Breast epithelium (tissue), 4 donors: ENCODE measurements at regions of chr6 and their contacts with region 1.

Region 1: GRCh38 chr6:98452685-98453084 is 381.7 kb upstream of the POU3F2 start:
- DNase-seq: no peak
- H3K4me3 ChIP-seq: no peak overlapping the region
- H3K27ac ChIP-seq: no peak overlapping the region
- H3K4me1 ChIP-seq: no peaks in the 10 kb centered on the region
- H3K27me3 ChIP-seq: no peaks in the 10 kb centered on the region
- CTCF ChIP-seq: no peak
- POLR2A ChIP-seq: no peak

Region 2: GRCh38 chr6:98384801-98385200 is 67.9 kb before region 1 on chr6:
- intact Hi-C with region 1: no loop called
- DNase-seq: no peak
- H3K4me3 ChIP-seq: no peak overlapping the region
- H3K27ac ChIP-seq: no peak overlapping the region
- H3K4me1 ChIP-seq: no peaks in the 10 kb centered on the region
- H3K27me3 ChIP-seq: no peaks in the 10 kb centered on the region
- CTCF ChIP-seq: no peak
- POLR2A ChIP-seq: no peak

Region 3: GRCh38 chr6:98487612-98488011 is 34.9 kb after region 1 on chr6:
- intact Hi-C with region 1: no loop called
- DNase-seq: no peak
- H3K4me3 ChIP-seq: no peak overlapping the region
- H3K27ac ChIP-seq: no peak overlapping the region
- H3K4me1 ChIP-seq: no peaks in the 10 kb centered on the region
- H3K27me3 ChIP-seq: no peaks in the 10 kb centered on the region
- CTCF ChIP-seq: no peak
- POLR2A ChIP-seq: no peak

Region 4: GRCh38 chr6:98530732-98531131 is 78.0 kb after region 1 on chr6:
- intact Hi-C with region 1: loop called (anchors 5 kb)
- DNase-seq: no peak
- H3K4me3 ChIP-seq: no peak overlapping the region
- H3K27ac ChIP-seq: no peak overlapping the region
- H3K4me1 ChIP-seq: no peaks in the 10 kb centered on the region
- H3K27me3 ChIP-seq: no peaks in the 10 kb centered on the region
- CTCF ChIP-seq: no peak
- POLR2A ChIP-seq: no peak